Activated CD8-positive, alpha-beta T cell treated with anti-CD3 and anti-CD28 coated beads for 36 hours (primary cell): ENCODE measurements at regions of chr1 and their contacts with region 1.

Region 1: GRCh38 chr1:110619412-110620249 is 13.5 kb upstream of the KCNA2 start:
- DNase-seq: peak; percentile 91
- ATAC-seq: peak; percentile 90
- H3K4me3 Mint-ChIP-seq: peak overlapping the region; percentile 76
- H3K27ac Mint-ChIP-seq: peak overlapping the region; percentile 77
- H3K4me1 Mint-ChIP-seq: peaks cover 27% of the 10 kb centered on the region
- H3K27me3 Mint-ChIP-seq: no peaks in the 10 kb centered on the region
- CTCF ChIP-seq: peak; percentile 94

Region 2: DNA sequence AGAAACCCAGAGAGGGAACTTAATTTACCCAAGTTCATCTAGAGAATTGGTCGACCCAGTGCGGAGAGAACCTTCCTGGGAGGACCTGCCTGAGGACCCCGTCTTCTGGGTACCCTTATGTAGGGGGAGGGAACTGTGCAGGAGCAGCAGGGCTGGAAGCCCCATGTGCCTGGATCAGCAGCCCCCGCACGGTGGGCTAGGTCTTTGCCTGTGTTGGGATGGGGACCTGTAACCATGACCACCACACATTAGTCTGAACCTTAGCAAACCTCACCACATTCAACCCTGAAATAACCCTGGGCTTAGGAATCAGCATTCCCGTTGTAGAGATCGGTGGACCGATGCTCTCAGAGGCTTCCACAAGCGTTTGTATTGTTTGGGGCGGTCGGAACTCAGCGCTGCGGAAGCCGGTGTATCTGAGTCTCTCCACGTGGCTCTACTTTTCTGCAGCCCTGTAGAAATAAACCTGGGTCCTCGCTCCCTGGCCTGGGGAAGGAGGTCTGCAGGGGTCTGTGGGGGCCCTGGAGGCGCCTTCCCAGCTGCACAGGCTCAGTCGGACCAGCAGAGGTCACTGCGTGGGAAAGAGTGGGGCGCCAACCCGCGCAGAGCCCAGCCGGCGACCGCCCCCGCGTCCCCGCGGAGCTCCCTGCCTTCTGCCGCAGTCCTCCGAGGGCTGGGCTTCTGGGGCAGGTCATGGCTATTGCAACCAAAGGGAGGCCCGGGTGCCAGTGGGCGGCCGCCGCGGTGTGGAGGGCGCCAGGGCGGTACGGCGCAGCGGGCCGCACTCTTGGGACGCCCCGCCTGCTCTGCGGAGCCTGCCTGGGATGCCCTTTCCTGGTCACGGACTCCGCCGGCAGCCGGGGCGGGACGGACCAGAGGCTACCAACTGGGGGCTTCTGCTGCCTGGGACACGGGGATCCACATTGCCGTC is 64.5 kb before region 1 on chr1:
- CTCF ChIA-PET with region 1: interaction called, 22 read pairs
- POLR2A ChIA-PET with region 1: no interaction called
- intact Hi-C with region 1: loop called (anchors 5 kb)
- DNase-seq: peak; percentile 65
- ATAC-seq: peak; percentile 92
- H3K4me3 Mint-ChIP-seq: peak overlapping the region; percentile 13
- H3K27ac Mint-ChIP-seq: no peak overlapping the region
- H3K4me1 Mint-ChIP-seq: no peaks in the 10 kb centered on the region
- H3K27me3 Mint-ChIP-seq: peaks cover 29% of the 10 kb centered on the region
- CTCF ChIP-seq: peak; percentile 83

Region 3: GRCh38 chr1:110630839-110631663 is 11.4 kb after region 1 on chr1:
- CTCF ChIA-PET with region 1: interaction called, 51 read pairs
- POLR2A ChIA-PET with region 1: interaction called, 9 read pairs
- intact Hi-C with region 1: no loop called
- DNase-seq: peak; percentile 89
- ATAC-seq: peak; percentile 69
- H3K4me3 Mint-ChIP-seq: no peak overlapping the region
- H3K27ac Mint-ChIP-seq: no peak overlapping the region
- H3K4me1 Mint-ChIP-seq: peaks cover 52% of the 10 kb centered on the region
- H3K27me3 Mint-ChIP-seq: no peaks in the 10 kb centered on the region
- CTCF ChIP-seq: peak; percentile 85

Region 4: GRCh38 chr1:110645821-110646735 is 26.4 kb after region 1 on chr1:
- CTCF ChIA-PET with region 1: interaction called, 32 read pairs
- POLR2A ChIA-PET with region 1: interaction called, 6 read pairs
- intact Hi-C with region 1: no loop called
- DNase-seq: no peak
- ATAC-seq: peak; percentile 47
- H3K4me3 Mint-ChIP-seq: no peak overlapping the region
- H3K27ac Mint-ChIP-seq: no peak overlapping the region
- H3K4me1 Mint-ChIP-seq: peaks cover 52% of the 10 kb centered on the region
- H3K27me3 Mint-ChIP-seq: no peaks in the 10 kb centered on the region
- CTCF ChIP-seq: no peak

Region 5: DNA sequence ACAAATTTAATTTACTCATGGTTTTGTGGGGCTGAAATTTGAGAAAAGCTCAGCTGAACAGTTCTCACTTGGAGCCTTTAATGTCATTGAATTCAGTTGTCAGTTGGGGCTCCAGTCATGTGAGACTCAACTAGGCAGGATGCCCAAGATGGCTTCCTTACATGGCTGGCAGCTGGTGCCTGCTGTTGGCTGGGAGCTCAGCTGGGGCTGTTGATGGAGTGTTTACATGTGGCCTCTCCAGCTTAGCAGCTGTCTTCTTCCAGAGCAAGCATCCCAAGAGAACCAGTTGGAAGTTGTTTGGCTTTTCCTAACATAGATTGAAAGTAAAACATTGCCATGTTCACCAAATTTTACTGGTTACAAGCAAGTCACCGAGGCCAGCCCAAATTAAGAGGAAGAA is 136.9 kb after region 1 on chr1:
- CTCF ChIA-PET with region 1: interaction called, 206 read pairs
- POLR2A ChIA-PET with region 1: no interaction called
- intact Hi-C with region 1: no loop called
- DNase-seq: no peak
- ATAC-seq: no peak
- H3K4me3 Mint-ChIP-seq: no peak overlapping the region
- H3K27ac Mint-ChIP-seq: no peak overlapping the region
- H3K4me1 Mint-ChIP-seq: no peaks in the 10 kb centered on the region
- H3K27me3 Mint-ChIP-seq: peaks cover 8% of the 10 kb centered on the region
- CTCF ChIP-seq: no peak